Activated CD4-positive, alpha-beta T cell treated with anti-CD3 and anti-CD28 coated beads for 36 hours (primary cell): ENCODE measurements at regions of chr7 and their contacts with region 1.

Region 1: DNA sequence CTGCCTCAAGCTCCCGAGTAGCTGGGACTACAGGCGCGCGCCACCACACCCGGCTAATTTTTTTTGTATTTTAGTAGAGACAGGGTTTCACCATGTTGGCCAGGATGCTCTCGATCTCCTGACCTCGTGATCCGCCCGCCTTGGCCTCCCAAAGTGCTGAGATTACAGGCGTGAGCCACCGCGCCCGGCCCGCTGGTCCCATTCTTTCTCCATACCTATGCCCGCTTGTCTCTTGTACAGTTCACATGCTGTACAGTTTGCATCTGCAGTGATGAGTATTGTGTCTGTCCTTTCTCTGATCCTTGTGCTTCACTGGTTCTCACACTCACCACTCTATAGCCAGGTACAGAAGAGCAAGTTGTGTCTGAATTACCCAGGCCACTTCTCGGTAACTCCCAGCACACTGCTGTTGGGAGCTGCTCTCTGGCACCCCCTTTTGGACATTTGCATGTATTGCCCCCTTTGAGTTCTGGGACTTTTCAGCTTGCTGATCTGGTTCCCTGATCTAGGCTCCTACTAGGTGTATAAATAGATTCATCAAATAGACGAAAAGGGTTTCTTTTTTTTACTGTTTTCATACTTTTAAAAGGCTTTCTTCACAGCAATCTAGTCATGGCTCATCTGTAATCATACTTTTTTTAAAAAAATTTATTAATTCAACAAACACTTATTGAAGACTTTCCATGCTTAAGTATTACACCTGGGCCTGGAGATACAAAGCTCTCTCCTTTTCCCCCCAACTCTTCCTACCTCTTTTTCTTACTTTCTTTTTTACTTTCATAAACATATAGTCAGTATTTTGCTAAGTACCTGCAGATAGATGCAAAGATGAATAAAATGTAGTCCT is 53.5 kb downstream of the AOAH start:
- DNase-seq: peak; percentile 80
- ATAC-seq: peak; percentile 80
- H3K4me3 Mint-ChIP-seq: no peak overlapping the region
- H3K27ac Mint-ChIP-seq: peak overlapping the region; percentile 80
- H3K4me1 Mint-ChIP-seq: peaks cover 61% of the 10 kb centered on the region
- H3K27me3 Mint-ChIP-seq: no peaks in the 10 kb centered on the region

Region 2: DNA sequence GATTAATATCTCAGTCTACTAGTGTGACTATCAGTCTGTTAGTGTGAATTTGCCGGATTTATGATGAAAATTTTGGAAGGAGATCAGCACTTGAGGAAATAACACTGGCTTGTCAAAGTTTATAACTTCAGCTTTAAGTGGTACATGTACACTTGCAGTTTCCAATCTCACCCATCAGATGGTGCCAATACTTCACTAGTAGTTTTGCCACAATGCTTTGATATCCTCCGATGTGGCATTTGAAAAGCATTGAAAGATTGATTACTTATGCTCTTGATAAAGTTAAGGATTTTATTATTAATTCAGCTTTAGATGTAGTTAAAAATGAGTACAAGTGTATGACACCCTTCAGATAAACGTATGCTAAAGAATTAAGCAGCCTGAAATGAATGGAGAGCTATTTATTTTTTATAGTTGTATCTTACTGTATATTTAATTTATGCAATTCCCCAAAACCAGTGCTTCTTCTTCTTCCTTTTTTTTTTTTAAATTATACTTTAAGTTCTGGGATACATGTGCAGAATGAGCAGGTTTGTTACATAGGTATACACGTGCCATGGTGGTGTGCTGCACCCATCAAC is 183.0 kb before region 1 on chr7:
- CTCF ChIA-PET with region 1: interaction called, 38 read pairs
- POLR2A ChIA-PET with region 1: no interaction called
- intact Hi-C with region 1: loop called (anchors 1 kb)
- DNase-seq: peak; percentile 23
- ATAC-seq: peak; percentile 55
- H3K4me3 Mint-ChIP-seq: no peak overlapping the region
- H3K27ac Mint-ChIP-seq: no peak overlapping the region
- H3K4me1 Mint-ChIP-seq: peaks cover 2% of the 10 kb centered on the region
- H3K27me3 Mint-ChIP-seq: peaks cover 4% of the 10 kb centered on the region

Region 3: DNA sequence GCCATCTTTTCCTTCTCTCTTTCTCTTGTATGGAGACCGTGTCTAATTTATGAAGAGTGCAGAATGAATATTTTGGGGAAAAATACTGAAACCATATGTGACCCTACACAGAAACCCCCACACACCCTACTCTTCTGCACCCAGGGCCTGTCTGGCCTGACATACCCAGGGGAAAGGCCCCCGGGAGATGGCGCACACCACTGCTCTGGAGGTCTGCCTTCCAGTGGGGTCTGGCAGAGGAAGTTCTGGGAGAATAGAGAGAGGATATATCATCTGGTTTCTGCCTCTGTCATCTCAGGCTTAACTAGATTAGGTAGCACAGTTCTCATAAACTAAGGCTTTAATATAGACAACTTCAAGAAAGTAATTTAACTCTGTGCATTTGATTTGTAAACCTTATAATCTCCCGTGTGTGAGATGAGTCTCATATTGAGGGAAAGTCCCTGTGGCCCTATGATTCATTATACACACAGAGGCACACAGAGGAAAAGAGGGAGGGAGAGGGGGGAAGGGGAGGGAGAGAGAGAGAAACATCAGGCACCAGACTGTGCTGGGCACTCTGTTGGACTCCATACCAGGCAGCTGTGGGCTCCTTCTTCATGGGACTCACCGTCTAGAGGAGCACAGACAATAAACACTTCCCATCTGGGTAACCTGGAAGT is 69.8 kb before region 1 on chr7:
- CTCF ChIA-PET with region 1: interaction called, 8 read pairs
- POLR2A ChIA-PET with region 1: no interaction called
- intact Hi-C with region 1: loop called in 1 of 2 experiments (anchors 5 kb)
- DNase-seq: peak; percentile 52
- ATAC-seq: peak; percentile 89
- H3K4me3 Mint-ChIP-seq: no peak overlapping the region
- H3K27ac Mint-ChIP-seq: peak overlapping the region; percentile 35
- H3K4me1 Mint-ChIP-seq: peaks cover 65% of the 10 kb centered on the region
- H3K27me3 Mint-ChIP-seq: no peaks in the 10 kb centered on the region

Region 4: GRCh38 chr7:36659172-36659516 is 11.7 kb before region 1 on chr7:
- CTCF ChIA-PET with region 1: interaction called, 15 read pairs
- POLR2A ChIA-PET with region 1: no interaction called
- intact Hi-C with region 1: no loop called
- DNase-seq: no peak
- ATAC-seq: no peak
- H3K4me3 Mint-ChIP-seq: no peak overlapping the region
- H3K27ac Mint-ChIP-seq: no peak overlapping the region
- H3K4me1 Mint-ChIP-seq: peaks cover 23% of the 10 kb centered on the region
- H3K27me3 Mint-ChIP-seq: no peaks in the 10 kb centered on the region

Region 5: GRCh38 chr7:37031571-37032257 is 360.9 kb after region 1 on chr7:
- CTCF ChIA-PET with region 1: no interaction called
- POLR2A ChIA-PET with region 1: no interaction called
- intact Hi-C with region 1: loop called (anchors 2 to 5 kb)
- DNase-seq: peak; percentile 73
- ATAC-seq: peak; percentile 90
- H3K4me3 Mint-ChIP-seq: no peak overlapping the region
- H3K27ac Mint-ChIP-seq: peak overlapping the region; percentile 52
- H3K4me1 Mint-ChIP-seq: peaks cover 77% of the 10 kb centered on the region
- H3K27me3 Mint-ChIP-seq: no peaks in the 10 kb centered on the region

Region 6: GRCh38 chr7:37336259-37336658 is 665.5 kb after region 1 on chr7:
- CTCF ChIA-PET with region 1: no interaction called
- POLR2A ChIA-PET with region 1: interaction called, 10 read pairs
- intact Hi-C with region 1: no loop called
- DNase-seq: peak; percentile 56
- ATAC-seq: peak; percentile 87
- H3K4me3 Mint-ChIP-seq: peak overlapping the region; percentile 39
- H3K27ac Mint-ChIP-seq: peak overlapping the region; percentile 90
- H3K4me1 Mint-ChIP-seq: peaks cover 90% of the 10 kb centered on the region
- H3K27me3 Mint-ChIP-seq: no peaks in the 10 kb centered on the region